ENCODE measurements at regions of chr1 and their contacts with region 1.

Region 1: GRCh38 chr1:44049839-44050238 is 18.6 kb upstream of the SLC6A9 start:
- DNase-seq: no peak
- H3K4me3 Mint-ChIP-seq: no peak overlapping the region
- H3K27ac Mint-ChIP-seq: no peak overlapping the region
- H3K4me1 Mint-ChIP-seq: peaks cover 13% of the 10 kb centered on the region
- H3K27me3 Mint-ChIP-seq: peaks cover 2% of the 10 kb centered on the region

Region 2: GRCh38 chr1:44036409-44037139 is 13.3 kb before region 1 on chr1:
- CTCF ChIA-PET with region 1: interaction called, 19 read pairs
- POLR2A ChIA-PET with region 1: no interaction called
- DNase-seq: peak; percentile 78
- H3K4me3 Mint-ChIP-seq: no peak overlapping the region
- H3K27ac Mint-ChIP-seq: no peak overlapping the region
- H3K4me1 Mint-ChIP-seq: peaks cover 12% of the 10 kb centered on the region
- H3K27me3 Mint-ChIP-seq: peaks cover 3% of the 10 kb centered on the region

Region 3: DNA sequence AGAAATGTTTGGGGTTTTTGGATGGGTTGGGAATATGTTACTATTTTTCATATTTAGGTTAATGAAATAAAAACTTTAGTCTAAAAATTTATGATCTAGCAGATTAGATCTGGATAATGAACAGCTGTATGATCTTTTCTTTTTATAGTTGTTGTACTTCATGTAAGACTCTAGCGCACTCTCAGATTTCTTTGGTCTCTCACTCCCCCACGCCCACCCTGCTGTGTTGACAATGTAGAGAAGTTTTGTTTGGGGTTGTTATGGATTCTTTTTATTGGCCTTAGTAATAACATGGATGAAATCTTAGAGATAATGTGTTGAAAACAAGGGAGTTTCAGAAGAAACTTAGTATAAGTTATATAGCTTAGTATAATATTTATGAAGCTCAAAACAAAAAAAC is 86.0 kb after region 1 on chr1:
- CTCF ChIA-PET with region 1: no interaction called
- POLR2A ChIA-PET with region 1: no interaction called
- DNase-seq: no peak
- H3K4me3 Mint-ChIP-seq: no peak overlapping the region
- H3K27ac Mint-ChIP-seq: no peak overlapping the region
- H3K4me1 Mint-ChIP-seq: no peaks in the 10 kb centered on the region
- H3K27me3 Mint-ChIP-seq: peaks cover 8% of the 10 kb centered on the region

Measured in activated CD4-positive, alpha-beta T cell treated with anti-CD3 and anti-CD28 coated beads, Interleukin-2, amount 10 ng/mL, durations not matched to agents 7 days and 5 days (primary cell).